Endothelial cell of umbilical vein (primary cell): ENCODE measurements at regions of chr2 and their contacts with region 1.

Region 1: GRCh38 chr2:231452799-231453508 is 11.3 kb downstream of the NCL start:
- DNase-seq: no peak
- H3K4me3 ChIP-seq: no peak overlapping the region
- H3K27ac ChIP-seq: no peak overlapping the region
- H3K4me1 ChIP-seq: peaks cover 8% of the 10 kb centered on the region
- H3K27me3 ChIP-seq: no peaks in the 10 kb centered on the region
- CTCF ChIP-seq: no peak
- POLR2A ChIP-seq: peak; percentile 57

Region 2: GRCh38 chr2:231104115-231104713 is 348.7 kb before region 1 on chr2:
- CTCF ChIA-PET with region 1: interaction called, 57 read pairs
- POLR2A ChIA-PET with region 1: no interaction called
- dilution Hi-C with region 1: loop called (anchors 25 kb)
- intact Hi-C with region 1: loop called (anchors 1 kb)
- DNase-seq: peak; percentile 86
- H3K4me3 ChIP-seq: no peak overlapping the region
- H3K27ac ChIP-seq: no peak overlapping the region
- H3K4me1 ChIP-seq: peaks cover 10% of the 10 kb centered on the region
- H3K27me3 ChIP-seq: no peaks in the 10 kb centered on the region
- CTCF ChIP-seq: peak; percentile 61 to 70
- POLR2A ChIP-seq: no peak

Region 3: DNA sequence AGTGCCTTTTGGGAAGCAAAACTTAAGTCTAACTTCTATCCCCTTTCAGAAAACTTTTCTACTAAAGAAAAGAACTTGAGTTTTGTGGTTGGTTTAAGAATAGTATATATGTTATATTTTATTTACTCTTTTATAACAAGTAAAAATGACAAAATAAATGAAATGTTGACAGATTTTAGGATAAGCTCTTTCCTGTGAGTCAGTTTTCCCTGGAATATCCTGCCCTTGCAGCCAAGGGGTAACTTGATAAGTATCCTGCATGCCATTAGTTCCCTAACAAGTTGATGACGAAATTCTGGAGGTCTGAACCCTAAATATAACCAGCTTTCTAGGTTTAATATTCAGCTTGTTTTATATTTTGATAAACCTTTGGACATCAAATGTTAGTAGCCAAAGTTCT is 320.8 kb before region 1 on chr2:
- CTCF ChIA-PET with region 1: no interaction called
- POLR2A ChIA-PET with region 1: interaction called, 10 read pairs
- dilution Hi-C with region 1: no loop called
- intact Hi-C with region 1: no loop called
- DNase-seq: peak; percentile 84
- H3K4me3 ChIP-seq: peak overlapping the region in 1 of 3 experiments; percentile 6
- H3K27ac ChIP-seq: peak overlapping the region; percentile 65
- H3K4me1 ChIP-seq: peaks cover 33% of the 10 kb centered on the region
- H3K27me3 ChIP-seq: no peaks in the 10 kb centered on the region
- CTCF ChIP-seq: no peak
- POLR2A ChIP-seq: no peak

Region 4: GRCh38 chr2:231227309-231228162 is 225.4 kb before region 1 on chr2:
- CTCF ChIA-PET with region 1: interaction called, 74 read pairs
- POLR2A ChIA-PET with region 1: no interaction called
- dilution Hi-C with region 1: no loop called
- intact Hi-C with region 1: loop called (anchors 1 kb)
- DNase-seq: peak; percentile 68
- H3K4me3 ChIP-seq: no peak overlapping the region
- H3K27ac ChIP-seq: no peak overlapping the region
- H3K4me1 ChIP-seq: no peaks in the 10 kb centered on the region
- H3K27me3 ChIP-seq: no peaks in the 10 kb centered on the region
- CTCF ChIP-seq: peak; percentile 80 to 92
- POLR2A ChIP-seq: no peak

Region 5: DNA sequence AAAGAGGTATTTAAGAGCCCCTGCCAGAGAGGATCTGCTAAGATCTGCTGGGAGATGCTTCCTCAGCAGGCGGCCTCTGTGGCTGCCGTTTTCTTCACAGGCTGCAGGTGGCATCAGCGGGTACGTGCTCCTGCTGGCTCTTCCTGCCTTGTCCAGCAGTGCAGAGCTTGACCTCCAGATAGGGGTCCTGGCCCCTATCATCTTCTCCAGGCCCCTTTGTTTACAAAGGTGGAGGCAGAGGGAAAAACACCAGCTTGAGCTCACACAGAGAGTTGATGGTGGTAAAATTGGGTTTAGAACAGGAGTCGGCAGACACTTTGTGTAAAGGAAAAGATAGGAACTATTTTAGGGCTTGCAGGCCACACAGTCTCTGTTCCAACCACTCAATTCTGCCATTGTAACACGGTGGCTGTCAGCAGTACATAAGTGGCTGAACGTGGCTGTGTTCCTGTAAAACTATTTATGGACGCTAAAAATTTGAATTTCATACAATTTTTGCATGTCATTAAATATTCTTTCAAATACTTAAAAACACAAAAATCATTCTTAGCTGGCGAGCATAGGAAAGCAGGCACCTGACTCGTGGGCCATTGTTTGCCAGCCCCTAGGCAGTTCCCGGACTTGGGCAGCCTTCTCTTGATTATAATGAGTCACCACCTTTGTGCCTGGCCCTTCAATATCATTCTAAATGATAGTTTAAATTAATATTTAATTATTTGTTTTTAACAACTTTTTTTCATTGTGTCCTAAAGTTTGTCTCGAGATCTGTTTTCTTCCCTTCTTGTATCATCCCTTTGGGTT is 155.6 kb before region 1 on chr2:
- CTCF ChIA-PET with region 1: interaction called, 12 read pairs
- POLR2A ChIA-PET with region 1: no interaction called
- dilution Hi-C with region 1: no loop called
- intact Hi-C with region 1: no loop called
- DNase-seq: peak; percentile 52
- H3K4me3 ChIP-seq: no peak overlapping the region
- H3K27ac ChIP-seq: no peak overlapping the region
- H3K4me1 ChIP-seq: peaks cover 18% of the 10 kb centered on the region
- H3K27me3 ChIP-seq: no peaks in the 10 kb centered on the region
- CTCF ChIP-seq: peak; percentile 63 to 88
- POLR2A ChIP-seq: no peak

Region 6: DNA sequence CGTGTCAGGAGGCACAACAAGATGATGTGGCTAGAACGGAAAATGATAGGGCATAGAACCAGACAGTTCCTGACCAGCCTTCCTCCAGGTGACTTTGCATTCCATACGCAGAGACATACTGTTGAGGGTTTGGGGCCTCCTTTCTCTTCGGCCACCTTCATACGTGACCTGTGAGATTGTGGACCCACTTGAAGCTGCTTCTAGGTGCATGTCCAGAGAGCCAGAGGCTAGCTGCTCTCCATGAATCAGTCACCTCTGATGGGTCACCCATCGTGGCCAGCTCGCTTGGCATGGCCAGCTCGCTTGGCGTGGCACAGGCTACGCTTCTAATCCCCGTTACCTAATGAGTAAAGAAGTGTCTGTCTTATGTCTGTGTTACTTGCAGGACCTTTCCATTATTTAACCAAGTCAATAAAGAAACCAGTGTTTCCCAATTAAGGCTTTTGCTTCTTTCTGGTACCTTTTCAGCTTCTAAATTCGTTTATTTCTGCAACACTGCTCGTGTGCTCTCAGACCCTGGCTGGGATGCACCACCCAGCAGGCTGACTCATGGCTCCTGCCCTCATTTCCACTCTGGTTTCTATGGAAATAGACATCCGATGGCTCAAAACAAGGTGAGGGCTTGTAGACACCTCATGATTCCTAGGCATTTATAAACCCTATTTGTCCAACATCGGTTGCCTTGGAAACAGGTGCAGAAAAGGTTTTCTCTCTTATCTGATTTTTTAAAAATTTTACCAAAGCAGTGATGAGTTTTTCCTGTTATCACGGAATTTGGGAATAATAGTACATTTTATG is 144.1 kb before region 1 on chr2:
- CTCF ChIA-PET with region 1: no interaction called
- POLR2A ChIA-PET with region 1: no interaction called
- dilution Hi-C with region 1: no loop called
- intact Hi-C with region 1: no loop called
- DNase-seq: no peak
- H3K4me3 ChIP-seq: no peak overlapping the region
- H3K27ac ChIP-seq: no peak overlapping the region
- H3K4me1 ChIP-seq: no peaks in the 10 kb centered on the region
- H3K27me3 ChIP-seq: no peaks in the 10 kb centered on the region
- CTCF ChIP-seq: no peak
- POLR2A ChIP-seq: no peak

Region 7: GRCh38 chr2:231436957-231437356 is 16.0 kb before region 1 on chr2:
- CTCF ChIA-PET with region 1: interaction called, 10 read pairs
- POLR2A ChIA-PET with region 1: no interaction called
- dilution Hi-C with region 1: no loop called
- intact Hi-C with region 1: no loop called
- DNase-seq: no peak
- H3K4me3 ChIP-seq: no peak overlapping the region
- H3K27ac ChIP-seq: no peak overlapping the region
- H3K4me1 ChIP-seq: no peaks in the 10 kb centered on the region
- H3K27me3 ChIP-seq: peaks cover 0 to 2% of the 10 kb centered on the region in 2 experiments
- CTCF ChIP-seq: no peak
- POLR2A ChIP-seq: no peak